Psoas muscle (tissue), 8 donors: ENCODE measurements at regions of chr9 and their contacts with region 1.

Region 1: GRCh38 chr9:129495534-129496325 is 125.2 kb downstream of the C9orf50 start:
- DNase-seq: peak; percentile 94 to 97
- ATAC-seq: peak; percentile 82 to 90 (median 84)
- H3K4me3 ChIP-seq: peak overlapping the region; percentile 81
- H3K27ac ChIP-seq: peak overlapping the region; percentile 92
- H3K4me1 ChIP-seq: peaks cover 33% of the 10 kb centered on the region
- H3K27me3 ChIP-seq: no peaks in the 10 kb centered on the region
- CTCF ChIP-seq: no peak

Region 2: DNA sequence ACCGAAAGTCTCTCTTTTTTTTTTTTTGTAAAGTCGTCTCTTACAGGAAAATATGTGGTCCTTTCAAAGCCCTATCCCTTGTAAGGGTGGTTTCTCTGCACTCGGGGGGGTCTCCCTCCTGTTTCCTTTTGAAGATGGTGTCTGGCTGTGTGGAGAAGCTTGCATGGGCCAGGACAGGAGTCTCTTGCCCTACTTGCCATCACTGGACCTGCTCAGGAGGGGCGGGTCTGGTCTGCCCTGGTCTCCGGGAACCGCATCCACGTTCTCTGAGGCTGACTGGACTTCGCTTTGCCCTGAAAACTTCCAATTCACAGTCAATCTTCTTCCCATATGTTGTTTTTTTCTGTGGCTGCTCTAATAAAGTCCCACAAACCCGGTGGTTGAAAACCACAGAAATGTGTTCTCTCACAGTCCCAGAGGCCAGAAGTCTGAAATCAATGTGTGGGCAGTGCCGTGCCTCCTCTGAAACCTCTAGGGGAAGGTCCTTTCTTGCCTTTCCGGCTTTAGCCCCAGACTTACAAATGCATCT is 224.8 kb before region 1 on chr9:
- intact Hi-C with region 1: no loop called
- DNase-seq: peak in 1 of 2 donors; percentile 6
- ATAC-seq: no peak
- H3K4me3 ChIP-seq: no peak overlapping the region
- H3K27ac ChIP-seq: no peak overlapping the region
- H3K4me1 ChIP-seq: no peaks in the 10 kb centered on the region
- H3K27me3 ChIP-seq: peaks cover 0 to 5% (median 0%) of the 10 kb centered on the region in 3 donors
- CTCF ChIP-seq: no peak

Region 3: GRCh38 chr9:129413537-129414376 is 82.0 kb before region 1 on chr9:
- intact Hi-C with region 1: loop called in 1 of 2 experiments (anchors 5 kb)
- DNase-seq: peak; percentile 99 to 100
- ATAC-seq: peak; percentile 92 to 94 (median 93)
- H3K4me3 ChIP-seq: peak overlapping the region; percentile 80
- H3K27ac ChIP-seq: peak overlapping the region; percentile 99
- H3K4me1 ChIP-seq: peaks cover 26% of the 10 kb centered on the region
- H3K27me3 ChIP-seq: no peaks in the 10 kb centered on the region
- CTCF ChIP-seq: no peak

Region 4: GRCh38 chr9:129428864-129429590 is 66.7 kb before region 1 on chr9:
- intact Hi-C with region 1: no loop called
- DNase-seq: no peak
- ATAC-seq: no peak
- H3K4me3 ChIP-seq: no peak overlapping the region
- H3K27ac ChIP-seq: no peak overlapping the region
- H3K4me1 ChIP-seq: no peaks in the 10 kb centered on the region
- H3K27me3 ChIP-seq: no peaks in the 10 kb centered on the region
- CTCF ChIP-seq: no peak

Region 5: GRCh38 chr9:129549685-129550084 is 54.0 kb after region 1 on chr9:
- intact Hi-C with region 1: loop called in 1 of 2 experiments (anchors 5 kb)
- DNase-seq: peak in 1 of 2 donors; percentile 46
- ATAC-seq: peak; percentile 25 to 63 (median 48)
- H3K4me3 ChIP-seq: peak overlapping the region; percentile 56
- H3K27ac ChIP-seq: peak overlapping the region; percentile 24
- H3K4me1 ChIP-seq: peaks cover 4% of the 10 kb centered on the region
- H3K27me3 ChIP-seq: peaks cover 0 to 9% (median 4%) of the 10 kb centered on the region in 3 donors
- CTCF ChIP-seq: no peak

Region 6: DNA sequence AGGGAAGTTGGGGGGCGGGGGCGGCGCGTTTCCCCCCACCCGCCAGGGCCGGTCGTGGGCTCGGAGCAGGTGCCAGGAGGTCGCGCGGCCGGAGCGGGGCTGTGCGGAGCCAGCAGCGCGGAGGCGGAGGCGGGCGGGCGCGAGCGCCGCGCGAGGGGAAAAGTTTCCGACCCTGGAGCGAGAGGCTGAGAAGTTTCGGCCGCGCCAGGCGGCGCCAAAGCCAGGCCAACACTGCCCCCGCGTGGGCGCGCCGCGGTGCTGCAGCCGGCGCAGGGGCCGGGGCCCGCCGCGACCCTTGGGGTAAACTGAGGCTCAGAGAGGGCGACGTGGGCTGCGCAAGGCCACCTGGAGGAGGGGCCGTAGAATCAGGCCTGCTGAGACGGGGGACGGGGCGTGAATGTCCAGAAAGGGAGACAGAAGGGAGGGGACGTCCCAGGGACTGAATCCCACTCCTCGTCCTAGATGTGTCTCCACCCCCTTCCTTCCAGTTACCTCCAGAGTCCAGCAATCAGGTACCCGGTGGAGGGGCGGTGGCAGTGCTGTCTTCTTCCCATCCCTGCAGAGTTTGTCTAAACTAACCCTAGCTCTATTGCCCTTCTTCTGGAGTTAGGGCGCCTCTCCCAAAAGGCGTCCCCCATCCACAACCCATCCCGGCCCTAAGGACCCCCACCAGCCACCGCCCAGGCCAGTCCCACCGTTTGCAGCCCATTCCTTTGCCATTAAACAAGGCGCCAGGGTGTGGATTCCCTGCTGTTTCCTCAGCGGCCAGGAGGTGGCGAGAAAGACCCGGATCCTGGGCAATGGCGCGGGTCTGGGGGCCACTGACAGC is 115.0 kb after region 1 on chr9:
- intact Hi-C with region 1: loop called in 1 of 2 experiments (anchors 2 kb)
- DNase-seq: peak; percentile 78 to 87
- ATAC-seq: peak; percentile 71 to 86 (median 81)
- H3K4me3 ChIP-seq: peak overlapping the region; percentile 73
- H3K27ac ChIP-seq: peak overlapping the region; percentile 74
- H3K4me1 ChIP-seq: peaks cover 18% of the 10 kb centered on the region
- H3K27me3 ChIP-seq: no peaks in the 10 kb centered on the region
- CTCF ChIP-seq: peak; percentile 96